GM18951 (cell line): ENCODE measurements at regions of chr13 and their contacts with region 1.

Region 1: GRCh38 chr13:44484562-44485138 is 91.5 kb downstream of the TSC22D1 start:
- POLR2A ChIP-seq: no peak

Region 2: DNA sequence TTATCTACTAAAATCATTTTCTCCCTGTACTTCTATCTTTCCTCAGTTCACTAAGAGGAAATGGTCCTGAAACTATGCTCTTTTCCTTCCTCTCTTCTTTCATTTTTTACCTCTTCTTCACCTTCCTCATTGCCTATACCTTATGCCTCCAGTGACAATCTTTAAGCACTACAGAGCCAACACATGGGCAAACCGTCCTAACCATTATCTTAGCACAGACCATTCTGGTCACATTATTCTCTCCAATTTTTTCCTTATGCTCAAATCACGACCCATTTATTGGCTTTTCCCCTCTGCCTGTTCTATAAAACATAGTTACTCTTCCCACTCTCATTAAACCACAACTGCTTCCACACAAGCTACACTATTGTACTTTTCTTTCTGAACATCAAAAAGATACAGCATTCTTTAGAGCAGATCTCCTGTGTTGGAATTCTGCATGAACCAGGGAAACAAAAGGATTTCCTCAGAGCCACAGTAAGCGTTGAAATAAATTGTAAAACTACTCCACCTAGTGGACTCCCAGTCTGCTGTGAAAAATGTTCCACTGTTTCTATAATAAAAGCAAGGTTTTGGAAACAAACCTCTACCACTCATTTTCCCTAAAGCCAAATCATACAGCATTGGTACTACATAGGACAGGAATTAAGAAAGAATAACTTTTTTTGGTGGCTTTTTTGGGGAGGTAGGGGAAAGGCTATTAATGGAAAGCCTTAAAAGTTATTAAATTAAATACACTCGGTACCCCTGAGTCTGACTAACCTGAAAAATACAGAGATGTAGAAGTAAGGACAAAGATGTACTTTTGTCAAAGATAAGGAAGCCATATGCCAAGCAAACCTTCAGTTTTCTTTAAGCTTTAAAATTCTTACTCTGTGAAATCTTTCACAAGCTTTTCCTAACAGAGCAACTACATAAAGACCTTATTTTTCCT is 485.2 kb after region 1 on chr13:
- in situ Hi-C with region 1: loop called (anchors 25 kb)
- POLR2A ChIP-seq: no peak

Region 3: GRCh38 chr13:45310341-45311125 is 825.9 kb after region 1 on chr13:
- in situ Hi-C with region 1: loop called (anchors 25 kb)
- POLR2A ChIP-seq: no peak